ENCODE measurements at regions of chr1 and their contacts with region 1.

Region 1: DNA sequence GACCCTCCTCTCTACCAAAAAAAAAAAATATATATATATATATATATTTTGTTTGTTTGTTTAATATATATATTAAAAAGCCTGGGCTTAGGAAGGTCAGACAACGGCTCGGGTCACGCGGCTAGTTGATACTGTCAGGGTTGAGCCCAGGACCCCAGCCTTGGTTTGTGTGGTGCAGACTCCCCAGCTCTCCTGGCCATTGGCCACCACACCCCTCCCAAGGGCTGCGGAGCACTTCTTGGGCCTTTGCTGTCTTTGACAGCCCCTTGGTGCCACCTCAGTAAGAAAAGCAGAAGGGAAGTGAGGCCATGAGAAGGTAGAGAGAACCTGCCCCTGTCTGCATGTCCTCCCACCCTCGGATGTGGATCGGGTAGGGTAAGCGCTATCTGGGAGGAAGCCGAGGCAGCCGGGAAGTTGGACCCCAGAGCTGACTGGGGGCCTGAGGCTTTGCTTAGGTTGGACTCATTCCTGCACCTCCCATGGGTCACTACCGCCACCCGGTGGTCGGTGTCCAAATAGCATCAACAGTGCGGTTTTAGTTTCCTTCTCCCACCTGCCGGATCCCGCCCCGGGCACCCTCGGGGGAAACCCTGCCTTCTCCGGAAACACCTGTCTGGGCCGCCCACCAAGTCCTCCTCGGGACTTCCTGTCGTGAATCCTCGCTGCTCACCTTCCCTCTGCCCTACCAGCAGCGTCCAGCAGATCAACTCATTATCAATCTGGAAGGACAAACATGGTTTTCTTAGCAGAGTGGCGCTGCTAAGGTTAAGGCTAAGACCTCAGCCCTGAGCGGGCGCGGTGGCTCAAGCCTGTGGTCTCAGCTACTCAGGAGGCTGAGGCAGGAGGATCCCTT is 29.8 kb upstream of the GNPAT start:
- DNase-seq: peak; percentile 51 to 84 (median 75)
- H3K4me3 ChIP-seq: peak overlapping the region; percentile 28
- H3K27ac ChIP-seq: no peak overlapping the region
- H3K4me1 ChIP-seq: no peaks in the 10 kb centered on the region
- H3K27me3 ChIP-seq: no peaks in the 10 kb centered on the region
- CTCF ChIP-seq: peak; percentile 65 to 78 (median 70)
- EP300 ChIP-seq: no peak
- POLR2A ChIP-seq: no peak

Region 2: GRCh38 chr1:230642263-230642959 is 568.8 kb before region 1 on chr1 and contains the start of gene COG2:
- intact Hi-C with region 1: loop called in 1 of 4 experiments (anchors 5 kb)
- DNase-seq: peak; percentile 89 to 96 (median 92)
- H3K4me3 ChIP-seq: peak within 1 kb of the TSS; percentile 88
- H3K27ac ChIP-seq: peak within 1 kb of the TSS in 1 of 2 donors; percentile 53
- H3K4me1 ChIP-seq: peaks cover 12% of the 10 kb centered on the region
- H3K27me3 ChIP-seq: no peaks in the 10 kb centered on the region
- CTCF ChIP-seq: peak; percentile 98 to 100 (median 98)
- EP300 ChIP-seq: no peak
- POLR2A ChIP-seq: peak; percentile 56
- total RNA-seq, gene COG2: 17.0 to 24.9 (median 21.5) TPM

Region 3: GRCh38 chr1:230797942-230798418 is 413.3 kb before region 1 on chr1:
- intact Hi-C with region 1: loop called (anchors 2 to 5 kb)
- DNase-seq: peak; percentile 60 to 74 (median 72)
- H3K4me3 ChIP-seq: no peak overlapping the region
- H3K27ac ChIP-seq: no peak overlapping the region
- H3K4me1 ChIP-seq: no peaks in the 10 kb centered on the region
- H3K27me3 ChIP-seq: no peaks in the 10 kb centered on the region
- CTCF ChIP-seq: peak; percentile 72 to 82 (median 77)
- EP300 ChIP-seq: no peak
- POLR2A ChIP-seq: no peak

Region 4: GRCh38 chr1:230917284-230918135 is 293.7 kb before region 1 on chr1:
- intact Hi-C with region 1: loop called in 1 of 4 experiments (anchors 10 kb)
- DNase-seq: peak; percentile 33 to 70 (median 66)
- H3K4me3 ChIP-seq: no peak overlapping the region
- H3K27ac ChIP-seq: no peak overlapping the region
- H3K4me1 ChIP-seq: peaks cover 1% of the 10 kb centered on the region
- H3K27me3 ChIP-seq: no peaks in the 10 kb centered on the region
- CTCF ChIP-seq: peak in 2 of 3 donors; percentile 15 to 65
- EP300 ChIP-seq: no peak
- POLR2A ChIP-seq: no peak

Region 5: DNA sequence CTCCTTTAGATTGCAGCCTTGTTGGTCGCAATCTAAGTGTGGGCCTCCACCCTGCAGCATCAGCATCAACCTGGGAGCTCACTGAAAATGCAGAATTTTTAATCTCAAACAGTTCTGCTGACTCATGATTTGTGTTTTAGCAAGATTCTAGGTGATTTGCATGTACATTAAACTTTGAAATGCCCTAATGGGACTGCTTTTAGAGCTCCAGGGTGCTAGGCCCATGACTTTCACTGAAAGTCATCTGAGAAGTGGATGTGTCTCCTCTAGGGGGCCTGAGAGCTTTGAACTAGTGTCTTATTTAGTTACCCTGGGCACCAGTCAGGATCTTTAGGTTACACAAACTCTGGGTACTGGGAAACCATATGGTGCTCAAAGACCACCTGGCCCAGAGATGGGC is 40.4 kb before region 1 on chr1:
- intact Hi-C with region 1: no loop called
- DNase-seq: no peak
- H3K4me3 ChIP-seq: no peak overlapping the region
- H3K27ac ChIP-seq: no peak overlapping the region
- H3K4me1 ChIP-seq: no peaks in the 10 kb centered on the region
- H3K27me3 ChIP-seq: no peaks in the 10 kb centered on the region
- CTCF ChIP-seq: no peak
- EP300 ChIP-seq: no peak
- POLR2A ChIP-seq: no peak

Measured in ovary (tissue), 10 donors.